ENCODE measurements at regions of chr20 and their contacts with region 1.

Region 1: GRCh38 chr20:1776681-1777475 is 118.3 kb upstream of the SIRPA start:
- DNase-seq: peak; percentile 83

Region 2: DNA sequence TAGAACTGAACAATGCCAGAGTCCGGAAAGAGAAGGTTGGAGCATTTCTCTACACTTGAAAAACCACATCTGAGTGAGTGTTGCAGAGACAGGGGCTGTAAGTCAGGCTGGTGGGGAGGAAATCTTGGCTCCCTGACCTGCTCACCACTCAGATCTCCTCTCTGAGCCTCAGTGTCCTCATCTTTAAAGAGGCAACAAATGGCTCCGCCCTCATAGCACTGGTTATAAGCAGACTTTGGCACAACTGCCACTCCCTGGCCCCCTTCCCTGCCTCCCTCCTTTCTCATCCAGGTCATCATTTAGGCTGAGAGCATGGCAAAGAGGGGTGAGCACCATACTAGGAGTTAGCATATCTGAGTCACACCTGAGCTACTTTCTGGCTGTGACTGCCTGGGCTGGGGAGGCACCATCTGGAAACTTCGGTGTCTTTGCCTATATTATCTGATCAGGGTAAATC is 129.9 kb before region 1 on chr20:
- CTCF ChIA-PET with region 1: no interaction called
- POLR2A ChIA-PET with region 1: no interaction called
- DNase-seq: no peak

Region 3: GRCh38 chr20:1764136-1765033 is 12.5 kb before region 1 on chr20:
- CTCF ChIA-PET with region 1: interaction called, 11 read pairs
- POLR2A ChIA-PET with region 1: interaction called, 6 read pairs
- DNase-seq: peak; percentile 71

Region 4: DNA sequence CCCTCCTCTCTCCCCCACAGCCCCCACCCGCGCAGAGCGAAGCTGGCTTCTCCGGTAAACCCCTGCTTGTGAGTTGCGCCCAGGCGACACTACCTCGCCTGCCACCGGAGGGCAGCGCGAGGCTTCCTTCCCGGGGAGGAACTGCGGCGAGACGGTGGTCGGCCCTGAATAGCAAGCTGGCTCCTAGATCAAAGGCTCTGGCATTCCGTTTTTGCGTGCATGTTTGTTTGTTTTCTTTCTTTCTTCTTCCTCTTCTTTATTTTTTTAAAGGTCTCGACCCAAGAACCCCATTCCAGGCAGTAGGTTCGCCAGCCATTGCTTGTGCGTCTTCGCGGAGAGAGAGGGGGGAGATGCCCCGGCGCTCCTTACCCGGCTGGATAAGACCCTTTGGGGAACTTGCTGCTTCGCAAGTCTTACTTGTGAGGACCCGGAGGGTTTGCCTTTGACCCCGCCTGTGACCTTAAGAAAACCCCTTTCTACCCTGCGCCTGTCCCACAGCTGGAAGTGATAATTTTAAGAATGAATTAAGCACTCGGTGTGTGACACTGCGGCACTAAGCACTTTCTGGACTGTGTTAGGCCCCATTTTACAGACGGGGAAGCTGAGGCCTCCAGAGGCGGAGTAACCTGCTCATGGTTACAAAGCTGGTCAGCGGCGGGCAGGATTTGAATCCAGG is 25.6 kb after region 1 on chr20:
- CTCF ChIA-PET with region 1: interaction called, 12 read pairs
- POLR2A ChIA-PET with region 1: interaction called, 6 read pairs
- DNase-seq: peak; percentile 77